Dorsolateral prefrontal cortex (tissue), 120 donors: ENCODE measurements at regions of chr17 and their contacts with region 1.

Region 1: GRCh38 chr17:42248351-42249179 is 27.6 kb downstream of the STAT5B start:
- DNase-seq: peak; percentile 52 to 90 (median 84)
- H3K4me3 ChIP-seq: peak overlapping the region; percentile 16 to 69 (median 50)
- H3K27ac ChIP-seq: peak overlapping the region; percentile 79 to 99 (median 96)
- H3K27me3 ChIP-seq: no peaks in the 10 kb centered on the region
- CTCF ChIP-seq: peak in 33 of 56 donors; percentile 4 to 59 (median 26)

Region 2: GRCh38 chr17:41571561-41572434 is 676.8 kb before region 1 on chr17 and contains the start of gene KRT9:
- intact Hi-C with region 1: no loop called
- DNase-seq: peak in 1 of 10 donors; percentile 20
- H3K4me3 ChIP-seq: no peak within 1 kb of the TSS
- H3K27ac ChIP-seq: no peak within 1 kb of the TSS
- H3K27me3 ChIP-seq: peaks cover 0 to 28% (median 4%) of the 10 kb centered on the region in 45 donors
- CTCF ChIP-seq: no peak
- total RNA-seq, gene KRT9: 0.18 to 0.33 (median 0.24) TPM in 3 of 120 experiments, not detected in the others

Region 3: DNA sequence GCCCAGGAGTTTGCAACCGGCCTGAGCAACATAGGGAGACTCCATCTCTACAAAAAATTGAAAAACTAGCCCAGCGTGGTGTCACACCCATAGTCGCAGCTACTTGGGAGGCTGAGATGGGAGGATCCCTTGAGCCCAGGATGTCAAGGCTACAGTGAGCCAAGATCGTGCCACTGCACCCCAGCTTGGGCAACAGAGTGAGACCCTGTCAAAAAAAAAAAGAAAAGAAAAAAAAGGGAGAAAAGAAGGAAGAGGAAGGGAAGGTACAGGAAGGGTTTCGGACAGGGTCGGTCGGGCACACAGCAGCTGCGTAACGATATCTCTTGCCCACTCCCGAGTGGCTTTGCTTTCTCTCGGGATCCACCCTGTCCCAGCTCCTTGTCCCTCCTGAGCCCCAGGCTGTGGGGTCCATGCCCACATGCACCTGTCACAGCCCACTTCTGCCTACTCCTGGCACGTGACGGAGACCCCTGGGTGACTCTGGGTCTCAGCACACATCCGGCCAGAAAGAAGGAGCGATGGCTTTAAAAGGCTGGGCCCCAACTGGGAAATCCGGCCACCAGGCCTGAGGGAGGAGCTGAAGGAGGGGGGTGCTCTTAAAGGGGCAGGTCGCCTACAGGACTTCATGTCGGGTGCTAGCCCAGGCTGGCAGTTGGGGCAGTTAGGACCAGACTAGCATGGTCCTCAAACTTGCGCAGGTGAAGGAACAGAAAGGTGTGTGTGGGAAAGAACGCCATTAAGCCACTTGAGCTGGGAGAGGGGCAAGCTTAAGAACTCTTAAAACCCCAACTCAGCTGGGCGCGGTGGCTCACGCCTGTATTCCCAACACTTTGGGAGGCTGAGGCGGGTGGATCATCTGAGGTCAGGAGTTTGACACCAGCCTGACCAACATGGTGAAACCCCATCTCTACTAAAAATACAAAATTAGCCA is 54.3 kb before region 1 on chr17 and contains the start of gene GHDC:
- intact Hi-C with region 1: loop called in 1 of 2 experiments (anchors 5 kb)
- DNase-seq: peak; percentile 75 to 92 (median 90)
- H3K4me3 ChIP-seq: peak within 1 kb of the TSS; percentile 50 to 98 (median 85)
- H3K27ac ChIP-seq: peak within 1 kb of the TSS in 58 of 59 donors; percentile 5 to 95 (median 81)
- H3K27me3 ChIP-seq: no peaks in the 10 kb centered on the region
- CTCF ChIP-seq: peak in 26 of 56 donors; percentile 6 to 42 (median 19)
- total RNA-seq, gene GHDC: 17.6 to 38.2 (median 23.9) TPM